ENCODE measurements at regions of chr9 and their contacts with region 1.

Region 1: GRCh38 chr9:12775679-12776512 is 1.1 kb downstream of the LURAP1L start:
- DNase-seq: peak; percentile 81 to 93
- ATAC-seq: peak; percentile 90 to 94
- H3K4me3 ChIP-seq: peak overlapping the region; percentile 67
- H3K27ac ChIP-seq: peak overlapping the region; percentile 96 to 97
- H3K4me1 ChIP-seq: peaks cover 41% of the 10 kb centered on the region
- CTCF ChIP-seq: peak; percentile 65
- EP300 ChIP-seq: no peak
- POLR2A ChIP-seq: peak; percentile 28; the same call in 1 of the 2 replicates
- RAD21 ChIP-seq: peak; percentile 74 to 76

Region 2: DNA sequence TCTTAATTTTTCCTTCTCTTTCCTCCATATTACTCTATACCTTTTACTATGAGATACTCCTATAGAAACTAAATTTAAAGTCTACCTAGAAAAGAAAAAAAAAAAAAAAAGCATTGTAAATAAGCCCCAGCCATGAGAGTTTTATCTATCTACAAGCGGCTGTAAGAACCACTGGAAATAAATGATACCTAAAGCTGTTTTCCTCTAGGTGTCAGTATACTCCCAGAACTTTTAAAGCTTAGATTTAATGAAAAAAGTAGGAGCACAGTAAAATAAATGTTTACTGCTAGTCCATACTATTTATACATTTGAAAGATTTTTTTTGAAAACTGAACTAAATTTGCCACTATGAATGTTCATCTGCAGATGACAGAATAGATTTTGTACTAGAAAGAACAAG is 56.5 kb before region 1 on chr9:
- CTCF ChIA-PET with region 1: interaction called, 91 read pairs
- POLR2A ChIA-PET with region 1: interaction called, 5 read pairs
- DNase-seq: peak in 1 of 2 experiments; percentile 58
- ATAC-seq: peak; percentile 58 to 77; a peak in 3 of 6 replicates
- H3K4me3 ChIP-seq: no peak overlapping the region
- H3K27ac ChIP-seq: no peak overlapping the region
- H3K4me1 ChIP-seq: peaks cover 15% of the 10 kb centered on the region; the same call in 2 of the 3 replicates
- CTCF ChIP-seq: peak; percentile 78
- EP300 ChIP-seq: no peak
- POLR2A ChIP-seq: no peak
- RAD21 ChIP-seq: peak; percentile 77 to 86

Region 3: GRCh38 chr9:12798066-12798770 is 22.3 kb after region 1 on chr9:
- CTCF ChIA-PET with region 1: interaction called, 21 read pairs
- POLR2A ChIA-PET with region 1: no interaction called
- DNase-seq: no peak
- ATAC-seq: peak; percentile 46 to 66; a peak in 2 of 6 replicates
- H3K4me3 ChIP-seq: no peak overlapping the region
- H3K27ac ChIP-seq: peak overlapping the region; percentile 46 to 58; a peak in 3 of 6 replicates
- H3K4me1 ChIP-seq: peaks cover 53% of the 10 kb centered on the region
- CTCF ChIP-seq: no peak
- EP300 ChIP-seq: no peak
- POLR2A ChIP-seq: no peak
- RAD21 ChIP-seq: no peak

Region 4: GRCh38 chr9:12813960-12814876 is 38.3 kb after region 1 on chr9:
- CTCF ChIA-PET with region 1: interaction called, 98 read pairs
- POLR2A ChIA-PET with region 1: interaction called, 48 read pairs
- DNase-seq: peak; percentile 71 to 96
- ATAC-seq: peak; percentile 79 to 82
- H3K4me3 ChIP-seq: peak overlapping the region; percentile 21; the same call in 2 of the 3 replicates
- H3K27ac ChIP-seq: peak overlapping the region; percentile 93 to 94
- H3K4me1 ChIP-seq: peaks cover 77% of the 10 kb centered on the region
- CTCF ChIP-seq: peak; percentile 6; the same call in 1 of the 3 replicates
- EP300 ChIP-seq: peak; percentile 98 to 99; a peak in 4 of 5 replicates
- POLR2A ChIP-seq: no peak
- RAD21 ChIP-seq: peak; percentile 14 to 59

Region 5: GRCh38 chr9:12819436-12820185 is 43.7 kb after region 1 on chr9:
- CTCF ChIA-PET with region 1: interaction called, 98 read pairs
- POLR2A ChIA-PET with region 1: interaction called, 48 read pairs
- DNase-seq: peak in 1 of 2 experiments; percentile 70
- ATAC-seq: no peak
- H3K4me3 ChIP-seq: no peak overlapping the region
- H3K27ac ChIP-seq: peak overlapping the region; percentile 93 to 94
- H3K4me1 ChIP-seq: peaks cover 53% of the 10 kb centered on the region
- CTCF ChIP-seq: peak; percentile 30
- EP300 ChIP-seq: no peak
- POLR2A ChIP-seq: no peak
- RAD21 ChIP-seq: peak; percentile 14 to 42; a peak in 2 of 5 replicates

Region 6: DNA sequence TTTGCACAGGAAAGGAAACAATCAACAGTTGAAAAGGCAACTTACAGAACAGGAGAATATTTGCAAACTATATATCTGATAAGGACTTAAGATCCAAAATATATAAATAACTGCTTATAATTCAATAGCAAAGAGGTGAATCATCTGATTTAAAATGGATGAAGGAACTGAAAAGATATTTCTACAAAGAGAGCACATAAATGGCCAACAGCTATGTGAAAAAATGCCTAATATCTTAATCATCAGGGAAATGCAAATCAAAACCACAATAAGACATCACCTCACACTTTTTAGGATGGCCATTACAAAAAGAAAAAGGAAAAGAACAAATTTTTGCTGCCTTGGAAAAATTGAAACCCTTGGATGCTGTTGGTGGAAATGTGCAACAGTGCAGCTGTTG is 99.3 kb after region 1 on chr9:
- CTCF ChIA-PET with region 1: interaction called, 21 read pairs
- POLR2A ChIA-PET with region 1: interaction called, 3 read pairs
- DNase-seq: no peak
- ATAC-seq: no peak
- H3K4me3 ChIP-seq: no peak overlapping the region
- H3K27ac ChIP-seq: no peak overlapping the region
- H3K4me1 ChIP-seq: peaks cover 22% of the 10 kb centered on the region; the same call in 2 of the 3 replicates
- CTCF ChIP-seq: no peak
- EP300 ChIP-seq: no peak
- POLR2A ChIP-seq: no peak
- RAD21 ChIP-seq: no peak

Region 7: DNA sequence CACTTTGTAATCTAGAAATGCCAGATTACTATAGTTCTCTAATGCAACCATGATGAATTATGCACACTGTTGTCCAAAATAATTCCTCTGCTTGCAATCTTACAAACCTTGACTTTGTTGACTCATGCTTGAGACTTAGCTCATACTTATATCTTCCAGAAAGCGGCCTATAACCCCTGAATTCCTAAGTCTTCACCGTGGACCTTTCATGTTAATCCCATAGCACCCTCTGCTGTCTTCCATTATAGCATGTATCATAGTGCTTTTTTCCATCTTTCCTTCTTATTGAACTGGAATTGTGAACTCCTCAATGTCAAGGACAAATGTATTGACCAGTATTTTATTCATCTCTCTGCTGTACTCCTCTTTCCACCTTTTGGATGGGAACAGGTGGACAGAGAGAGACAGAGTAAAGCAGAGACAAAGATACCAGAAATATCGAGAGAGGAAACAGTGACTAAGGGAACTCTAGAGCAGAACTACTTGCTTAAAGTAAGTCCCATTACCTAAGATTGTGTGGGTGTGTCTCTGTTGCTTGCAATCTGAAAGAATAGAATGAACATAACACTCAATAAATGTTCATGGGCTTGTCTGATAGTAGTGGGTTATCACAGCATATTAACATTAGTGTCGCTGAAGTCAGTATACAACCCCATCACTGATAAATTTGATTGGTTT is 109.0 kb after region 1 on chr9:
- CTCF ChIA-PET with region 1: interaction called, 28 read pairs
- POLR2A ChIA-PET with region 1: interaction called, 7 read pairs
- DNase-seq: peak; percentile 32 to 86
- ATAC-seq: peak; percentile 97 to 99
- H3K4me3 ChIP-seq: no peak overlapping the region
- H3K27ac ChIP-seq: peak overlapping the region; percentile 31 to 59; a peak in 4 of 6 replicates
- H3K4me1 ChIP-seq: peaks cover 33% of the 10 kb centered on the region; the same call in 2 of the 3 replicates
- CTCF ChIP-seq: peak; percentile 89
- EP300 ChIP-seq: no peak
- POLR2A ChIP-seq: no peak
- RAD21 ChIP-seq: peak; percentile 98 to 99

Region 8: DNA sequence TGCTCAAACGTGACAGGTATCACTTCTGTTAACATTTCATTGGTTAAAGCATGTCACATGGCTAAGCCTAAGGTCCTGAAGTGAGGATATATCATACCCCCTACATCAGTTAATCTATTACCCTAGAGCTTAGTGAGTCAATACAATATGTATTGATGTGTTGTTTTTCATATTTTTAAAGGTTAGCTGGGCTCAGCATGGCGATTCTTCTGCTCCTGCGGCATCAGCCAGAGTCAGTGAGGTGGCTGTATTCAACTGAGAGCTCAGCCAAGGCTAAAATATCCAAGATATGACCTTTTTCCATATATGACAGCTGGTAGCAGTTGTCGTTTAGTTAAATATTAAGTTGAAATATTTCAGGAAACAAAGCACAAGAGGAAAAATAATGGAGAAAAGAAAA is 542.1 kb after region 1 on chr9:
- CTCF ChIA-PET with region 1: no interaction called
- POLR2A ChIA-PET with region 1: no interaction called
- DNase-seq: no peak
- ATAC-seq: no peak
- H3K4me3 ChIP-seq: no peak overlapping the region
- H3K27ac ChIP-seq: no peak overlapping the region
- H3K4me1 ChIP-seq: no peaks in the 10 kb centered on the region
- CTCF ChIP-seq: no peak
- EP300 ChIP-seq: no peak
- POLR2A ChIP-seq: no peak
- RAD21 ChIP-seq: no peak

Measured in A549 (cell line).